Dorsolateral prefrontal cortex (tissue), 120 donors: ENCODE measurements at regions of chr16 and their contacts with region 1.

Region 1: DNA sequence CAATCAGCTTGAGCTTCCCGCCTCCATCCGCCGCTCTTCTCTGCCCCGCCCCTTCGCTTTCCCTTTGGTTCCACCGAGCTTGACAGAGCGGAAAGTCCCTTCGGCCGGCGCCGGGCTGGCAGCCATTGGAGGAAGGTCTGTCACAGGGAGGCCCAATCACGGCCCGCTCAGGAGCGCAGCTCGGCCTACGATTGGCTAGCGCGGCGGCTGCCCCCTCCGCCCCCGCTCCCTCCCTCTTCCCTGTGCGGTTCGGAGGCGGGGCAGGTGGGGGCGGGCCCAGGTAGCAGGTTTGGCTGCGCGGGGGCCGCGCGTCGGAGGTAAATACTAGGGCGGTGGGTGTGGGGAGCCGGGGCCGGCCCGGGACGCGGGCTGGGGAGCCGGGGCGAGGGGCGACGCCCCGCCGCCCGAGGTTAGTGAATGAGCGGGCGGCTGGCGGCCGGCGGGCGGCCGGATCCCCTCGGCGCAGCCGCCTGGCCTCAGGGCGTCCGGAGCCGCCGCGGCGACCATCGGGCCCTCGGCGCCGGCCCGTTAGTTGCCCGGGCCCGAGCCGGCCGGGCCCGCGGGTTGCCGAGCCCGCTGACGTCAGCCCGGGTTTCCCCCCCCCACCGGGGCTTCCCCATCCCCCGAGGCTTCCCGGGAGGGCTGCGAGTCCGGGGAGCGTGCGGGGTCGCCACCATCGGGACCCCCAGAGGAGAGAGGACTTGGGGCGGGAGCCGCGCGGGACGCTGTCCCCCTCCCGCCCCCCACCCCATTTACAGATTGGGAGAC is at the start of gene CYLD:
- DNase-seq: peak; percentile 99 to 100 (median 100)
- H3K4me3 ChIP-seq: peak within 1 kb of the TSS; percentile 57 to 98 (median 86)
- H3K27ac ChIP-seq: peak within 1 kb of the TSS in 58 of 59 donors; percentile 30 to 97 (median 89)
- H3K27me3 ChIP-seq: no peaks in the 10 kb centered on the region
- CTCF ChIP-seq: peak in 14 of 56 donors; percentile 5 to 43 (median 21)
- total RNA-seq, gene CYLD: 58.7 to 116 (median 82.7) TPM

Region 2: DNA sequence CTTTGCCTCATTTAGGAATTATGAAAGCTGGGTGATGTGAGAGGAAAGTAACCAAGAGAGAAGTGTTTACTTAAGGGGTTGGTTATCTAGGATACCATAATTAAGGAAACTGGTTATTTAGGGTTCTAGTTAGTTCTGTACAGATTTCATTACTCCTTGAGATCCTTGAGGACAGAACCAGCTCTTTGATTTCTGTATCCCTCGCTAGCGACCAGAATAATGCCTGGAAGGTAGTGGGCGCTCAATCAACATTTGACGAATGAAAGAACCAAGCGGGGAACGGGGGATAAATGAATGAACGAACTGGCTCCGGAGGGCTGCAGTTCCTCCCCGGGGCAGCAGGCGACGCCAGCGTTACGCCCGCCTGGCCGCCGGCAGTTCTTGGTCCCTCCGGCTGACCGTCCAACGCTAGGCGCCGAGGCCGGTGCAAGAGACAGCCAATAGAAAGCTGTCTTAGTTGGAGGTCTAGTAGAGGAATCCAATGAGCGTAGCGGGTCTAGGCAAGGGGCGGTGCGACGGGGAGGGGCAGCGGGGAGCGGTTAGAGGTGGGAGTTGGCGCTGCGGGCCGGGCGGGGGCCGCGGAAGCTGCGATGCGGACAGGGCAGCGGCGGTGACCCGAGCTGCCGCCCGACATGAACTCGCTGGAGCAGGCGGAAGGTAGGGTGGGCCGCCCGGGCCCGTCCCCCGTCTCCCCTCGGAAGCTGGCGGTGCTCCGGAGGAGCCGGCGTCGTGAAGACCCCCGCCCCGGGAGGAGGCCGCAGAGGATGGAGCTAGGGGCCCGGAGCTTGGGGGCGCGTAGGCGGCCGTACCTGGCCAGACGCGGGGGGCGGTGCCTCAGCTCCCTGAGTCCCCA is 717.1 kb before region 1 on chr16 and contains the start of gene CNEP1R1:
- intact Hi-C with region 1: loop called in 1 of 2 experiments (anchors 10 kb)
- DNase-seq: peak; percentile 87 to 95 (median 94)
- H3K4me3 ChIP-seq: peak within 1 kb of the TSS; percentile 71 to 100 (median 99)
- H3K27ac ChIP-seq: peak within 1 kb of the TSS in 55 of 59 donors; percentile 27 to 93 (median 81)
- H3K27me3 ChIP-seq: no peaks in the 10 kb centered on the region
- CTCF ChIP-seq: peak; percentile 97 to 100 (median 100)
- total RNA-seq, gene CNEP1R1: 16.8 to 35.7 (median 24.8) TPM

Region 3: DNA sequence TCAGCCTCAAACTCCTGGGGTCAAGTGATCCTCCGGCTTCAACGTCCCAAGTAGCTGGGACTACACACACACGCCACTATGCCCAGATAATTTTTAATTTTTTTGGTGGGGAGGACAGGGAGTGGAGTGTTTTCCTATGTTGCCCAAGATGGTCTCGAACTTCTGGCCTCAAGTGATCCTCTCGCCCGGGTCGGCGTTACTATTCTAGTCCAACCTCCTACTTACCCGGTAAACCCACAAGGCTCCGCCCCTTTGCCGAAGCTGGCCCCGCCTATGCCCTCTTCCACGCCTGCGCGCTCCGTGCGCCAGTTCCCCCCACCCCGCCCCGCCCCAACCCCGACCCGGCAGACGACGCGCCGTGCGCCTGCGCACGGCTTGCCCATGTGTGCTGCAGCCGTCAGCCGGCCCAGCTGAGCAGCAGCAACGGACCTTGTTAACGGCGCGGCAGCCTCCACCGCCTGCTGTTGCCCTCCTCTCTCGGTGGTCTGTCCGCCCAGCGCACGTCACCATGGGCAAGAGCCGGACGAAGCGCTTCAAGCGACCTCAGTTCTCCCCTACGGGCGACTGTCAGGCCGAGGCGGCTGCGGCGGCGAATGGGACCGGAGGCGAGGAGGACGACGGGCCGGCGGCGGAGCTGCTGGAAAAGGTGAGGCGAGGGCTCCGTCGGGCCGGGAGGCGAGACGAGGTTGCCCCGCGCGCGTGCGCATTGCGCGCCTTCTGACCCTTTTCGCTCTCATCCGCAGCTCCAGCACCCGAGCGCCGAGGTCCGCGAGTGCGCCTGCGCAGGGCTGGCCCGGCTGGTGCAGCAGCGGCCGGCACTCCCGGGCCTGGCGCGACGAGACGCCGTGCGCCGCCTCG is 676.1 kb before region 1 on chr16 and contains the start of gene HEATR3:
- intact Hi-C with region 1: loop called (anchors 5 to 10 kb)
- DNase-seq: peak; percentile 82 to 94 (median 90)
- H3K4me3 ChIP-seq: peak within 1 kb of the TSS; percentile 67 to 100 (median 97)
- H3K27ac ChIP-seq: peak within 1 kb of the TSS; percentile 68 to 100 (median 98)
- H3K27me3 ChIP-seq: no peaks in the 10 kb centered on the region
- CTCF ChIP-seq: peak in 26 of 56 donors; percentile 2 to 40 (median 16)
- total RNA-seq, gene HEATR3: 11.3 to 36.1 (median 20.5) TPM

Region 4: GRCh38 chr16:50152807-50153452 is 589.1 kb before region 1 on chr16 and contains the start of gene TENT4B:
- intact Hi-C with region 1: loop called in 1 of 2 experiments (anchors 10 kb)
- DNase-seq: peak; percentile 67 to 90 (median 79)
- H3K4me3 ChIP-seq: peak within 1 kb of the TSS; percentile 78 to 97 (median 90)
- H3K27ac ChIP-seq: peak within 1 kb of the TSS; percentile 80 to 98 (median 94)
- H3K27me3 ChIP-seq: no peaks in the 10 kb centered on the region
- CTCF ChIP-seq: peak in 9 of 56 donors; percentile 6 to 42 (median 10)
- total RNA-seq, gene TENT4B: 9.9 to 37.1 (median 18.3) TPM

Region 5: GRCh38 chr16:50696575-50697420 is 45.2 kb before region 1 on chr16:
- intact Hi-C with region 1: loop called in 1 of 2 experiments (anchors 5 kb)
- DNase-seq: no peak
- H3K4me3 ChIP-seq: no peak overlapping the region
- H3K27ac ChIP-seq: peak overlapping the region in 24 of 59 donors; percentile 7 to 82 (median 48)
- H3K27me3 ChIP-seq: peaks cover 0 to 31% (median 6%) of the 10 kb centered on the region in 45 donors
- CTCF ChIP-seq: no peak

Region 6: GRCh38 chr16:50709053-50709684 is 32.8 kb before region 1 on chr16:
- intact Hi-C with region 1: loop called in 1 of 2 experiments (anchors 5 kb)
- DNase-seq: no peak
- H3K4me3 ChIP-seq: no peak overlapping the region
- H3K27ac ChIP-seq: no peak overlapping the region
- H3K27me3 ChIP-seq: no peaks in the 10 kb centered on the region
- CTCF ChIP-seq: no peak

Region 7: GRCh38 chr16:50763211-50763610 is 21.2 kb after region 1 on chr16:
- intact Hi-C with region 1: no loop called
- DNase-seq: no peak
- H3K4me3 ChIP-seq: no peak overlapping the region
- H3K27ac ChIP-seq: peak overlapping the region in 7 of 59 donors; percentile 5 to 49 (median 39)
- H3K27me3 ChIP-seq: no peaks in the 10 kb centered on the region
- CTCF ChIP-seq: no peak

Region 8: DNA sequence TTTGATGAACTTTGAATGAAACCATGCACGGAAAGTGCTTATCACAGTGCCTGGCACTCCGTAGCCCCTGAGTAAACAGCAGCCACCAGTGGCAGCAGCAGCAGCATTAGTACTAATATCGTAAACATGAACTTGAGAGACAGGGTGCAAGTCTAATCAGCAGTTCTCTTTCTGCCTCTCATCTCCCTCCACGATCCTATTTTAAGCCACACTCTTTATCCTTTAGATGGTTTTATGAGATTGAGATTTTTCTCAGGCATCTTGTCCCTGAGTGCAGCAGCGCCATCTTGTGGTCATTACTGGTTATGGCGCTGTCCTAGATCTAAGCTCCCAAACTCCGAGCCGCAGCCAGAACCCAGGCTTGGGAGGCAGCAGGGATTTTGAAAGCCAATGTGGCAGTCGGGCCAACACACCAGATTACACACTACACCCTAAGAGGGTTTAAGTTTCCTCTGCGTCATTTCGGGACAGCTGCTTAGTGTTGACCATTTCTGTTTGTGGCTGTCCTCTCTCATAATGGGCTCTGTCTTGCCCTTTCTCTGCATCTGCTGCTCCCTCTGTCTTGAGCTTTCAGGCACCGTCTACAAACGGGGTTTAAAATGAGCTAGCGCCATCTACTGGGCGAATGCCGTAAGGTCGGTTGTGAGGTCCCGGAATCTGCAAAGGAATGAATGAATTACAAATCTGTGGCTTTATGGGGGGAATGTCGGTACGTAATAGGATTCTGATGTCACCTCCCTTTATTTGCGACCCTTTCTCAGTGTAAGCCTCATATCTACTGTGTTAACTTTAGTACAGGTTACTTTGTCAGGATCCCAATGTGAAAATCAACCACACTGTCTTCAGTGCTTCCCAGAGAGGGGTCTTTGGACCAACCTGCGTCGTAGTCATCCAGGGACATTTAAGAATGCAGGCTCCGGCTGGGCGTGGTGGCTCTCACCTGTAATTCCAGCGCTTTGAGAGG is 64.4 kb after region 1 on chr16:
- intact Hi-C with region 1: loop called (anchors 5 kb)
- DNase-seq: peak; percentile 80 to 93 (median 84)
- H3K4me3 ChIP-seq: peak overlapping the region in 56 of 59 donors; percentile 17 to 62 (median 47)
- H3K27ac ChIP-seq: peak overlapping the region; percentile 69 to 96 (median 92)
- H3K27me3 ChIP-seq: no peaks in the 10 kb centered on the region
- CTCF ChIP-seq: peak; percentile 81 to 100 (median 97)